Panc1 (cell line): ENCODE measurements at regions of chr19 and their contacts with region 1.

Region 1: DNA sequence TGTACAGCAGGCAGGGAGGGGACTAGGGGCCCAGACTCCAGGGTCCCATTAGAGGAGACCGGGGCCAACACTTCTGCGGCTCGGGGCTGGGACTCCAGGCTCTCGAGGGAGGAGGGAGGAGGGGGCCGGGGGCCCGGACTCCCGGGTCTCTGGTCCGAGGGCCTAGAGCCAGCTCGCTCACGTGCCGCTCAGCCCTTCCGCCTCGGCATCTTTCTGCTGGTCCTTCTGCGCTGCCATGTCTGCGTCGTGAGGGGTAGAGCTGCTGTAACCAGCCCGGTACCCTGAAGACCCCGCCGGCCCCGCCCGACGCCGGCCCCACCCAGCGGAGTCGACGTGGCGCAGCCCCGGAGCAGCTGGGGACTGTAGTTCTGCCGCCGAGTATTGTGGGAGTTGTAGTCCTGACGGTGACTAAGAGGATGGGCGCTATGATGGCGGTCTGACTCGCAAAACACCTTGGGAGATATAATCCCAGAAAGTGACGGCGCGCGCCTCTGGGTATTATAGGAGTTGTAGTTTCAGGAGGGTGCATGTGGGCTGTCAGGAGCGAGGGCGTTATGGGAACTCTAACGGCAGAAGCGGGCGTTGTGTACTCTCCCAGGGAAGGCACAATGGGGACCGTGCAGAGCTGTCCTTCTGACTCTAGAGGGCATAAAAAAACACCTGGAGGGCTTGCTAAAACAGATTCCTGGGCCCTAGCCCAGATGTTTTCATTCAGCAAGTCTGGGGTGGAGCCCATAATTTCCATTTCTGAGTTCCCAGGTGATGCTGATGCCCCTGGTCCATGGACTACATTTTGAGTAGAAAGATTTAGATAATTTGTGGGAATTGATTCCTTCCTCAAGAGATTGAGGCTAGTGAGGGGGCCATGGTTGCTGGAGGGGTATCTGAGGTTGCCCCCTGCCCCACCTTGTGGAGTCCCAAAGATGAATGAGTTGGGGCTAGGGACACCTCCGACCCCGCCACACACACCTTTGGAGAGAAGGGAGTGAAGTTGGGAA is at the start of gene RABAC1:
- DNase-seq: peak; percentile 45
- ATAC-seq: peak; percentile 90
- H3K4me3 ChIP-seq: peak within 1 kb of the TSS; percentile 66 to 73
- H3K27ac ChIP-seq: peak within 1 kb of the TSS; percentile 65
- H3K4me1 ChIP-seq: peaks cover 7% of the 10 kb centered on the region
- H3K27me3 ChIP-seq: no peaks in the 10 kb centered on the region
- CTCF ChIP-seq: no peak
- total RNA-seq, gene RABAC1: 69.1 TPM

Region 2: GRCh38 chr19:41862445-41862986 is 96.8 kb before region 1 on chr19:
- CTCF ChIA-PET with region 1: no interaction called
- POLR2A ChIA-PET with region 1: interaction called, 11 read pairs
- in situ Hi-C with region 1: no loop called
- intact Hi-C with region 1: no loop called
- DNase-seq: no peak
- ATAC-seq: no peak
- H3K4me3 ChIP-seq: peak overlapping the region in 1 of 2 experiments; percentile 94; a peak in 1 of 4 replicates
- H3K27ac ChIP-seq: no peak overlapping the region; the same call in 1 of the 2 replicates
- H3K4me1 ChIP-seq: peaks cover 28% of the 10 kb centered on the region
- H3K27me3 ChIP-seq: no peaks in the 10 kb centered on the region
- CTCF ChIP-seq: no peak